ENCODE measurements at regions of chr12 and their contacts with region 1.

Region 1: GRCh38 chr12:24012528-24012927 is 63.1 kb upstream of the SOX5 start:
- DNase-seq: peak; percentile 35
- H3K4me3 ChIP-seq: no peak overlapping the region
- H3K27ac ChIP-seq: no peak overlapping the region
- H3K4me1 ChIP-seq: no peaks in the 10 kb centered on the region
- H3K27me3 ChIP-seq: peaks cover 5 to 9% of the 10 kb centered on the region in 2 experiments
- CTCF ChIP-seq: no peak
- POLR2A ChIP-seq: no peak

Region 2: DNA sequence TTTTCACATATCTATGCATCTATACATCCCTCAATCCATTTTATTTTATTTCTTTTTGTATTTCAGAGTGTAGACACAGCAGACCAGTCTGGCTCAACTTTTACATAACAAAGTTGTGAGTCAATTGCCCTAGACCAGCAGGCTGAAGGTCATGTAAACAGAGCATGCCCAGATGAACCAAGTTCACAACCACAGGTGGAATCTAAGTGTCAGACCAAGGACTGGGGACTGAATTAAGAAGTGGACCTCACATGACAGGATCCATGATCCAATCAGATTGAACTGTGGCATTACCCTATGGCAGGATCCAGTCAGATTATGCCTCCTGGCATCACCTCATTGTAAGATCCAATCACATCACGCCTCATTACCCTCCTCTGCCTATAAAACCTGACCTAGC is 518.9 kb before region 1 on chr12:
- CTCF ChIA-PET with region 1: no interaction called
- POLR2A ChIA-PET with region 1: no interaction called
- dilution Hi-C with region 1: no loop called
- intact Hi-C with region 1: loop called (anchors 10 kb)
- DNase-seq: no peak
- H3K4me3 ChIP-seq: no peak overlapping the region
- H3K27ac ChIP-seq: no peak overlapping the region
- H3K4me1 ChIP-seq: no peaks in the 10 kb centered on the region
- H3K27me3 ChIP-seq: no peaks in the 10 kb centered on the region
- CTCF ChIP-seq: no peak
- POLR2A ChIP-seq: no peak

Region 3: GRCh38 chr12:24625103-24625502 is 612.6 kb after region 1 on chr12:
- CTCF ChIA-PET with region 1: no interaction called
- POLR2A ChIA-PET with region 1: no interaction called
- dilution Hi-C with region 1: no loop called
- intact Hi-C with region 1: no loop called
- DNase-seq: no peak
- H3K4me3 ChIP-seq: no peak overlapping the region
- H3K27ac ChIP-seq: no peak overlapping the region
- H3K4me1 ChIP-seq: no peaks in the 10 kb centered on the region
- H3K27me3 ChIP-seq: peaks cover 0 to 2% of the 10 kb centered on the region in 2 experiments
- CTCF ChIP-seq: no peak
- POLR2A ChIP-seq: no peak

Region 4: GRCh38 chr12:24728366-24728765 is 715.8 kb after region 1 on chr12:
- CTCF ChIA-PET with region 1: interaction called, 22 read pairs
- POLR2A ChIA-PET with region 1: no interaction called
- dilution Hi-C with region 1: no loop called
- intact Hi-C with region 1: loop called (anchors 5 kb)
- DNase-seq: peak; percentile 31
- H3K4me3 ChIP-seq: no peak overlapping the region
- H3K27ac ChIP-seq: no peak overlapping the region
- H3K4me1 ChIP-seq: no peaks in the 10 kb centered on the region
- H3K27me3 ChIP-seq: peaks cover 2 to 3% of the 10 kb centered on the region in 2 experiments
- CTCF ChIP-seq: peak; percentile 10 to 48
- POLR2A ChIP-seq: no peak

Region 5: GRCh38 chr12:24778486-24779304 is 766.2 kb after region 1 on chr12:
- CTCF ChIA-PET with region 1: interaction called, 18 read pairs
- POLR2A ChIA-PET with region 1: no interaction called
- dilution Hi-C with region 1: no loop called
- intact Hi-C with region 1: loop called (anchors 5 kb)
- DNase-seq: peak; percentile 39
- H3K4me3 ChIP-seq: no peak overlapping the region
- H3K27ac ChIP-seq: no peak overlapping the region
- H3K4me1 ChIP-seq: no peaks in the 10 kb centered on the region
- H3K27me3 ChIP-seq: peaks cover 0 to 4% of the 10 kb centered on the region in 2 experiments
- CTCF ChIP-seq: peak; percentile 17 to 26
- POLR2A ChIP-seq: no peak